Esophagus squamous epithelium (tissue), 5 donors: ENCODE measurements at regions of chr1 and their contacts with region 1.

Region 1: GRCh38 chr1:112706908-112707663 is at the start of gene RHOC:
- DNase-seq: peak; percentile 18
- H3K4me3 ChIP-seq: peak within 1 kb of the TSS; percentile 76 to 88 (median 78)
- H3K27ac ChIP-seq: peak within 1 kb of the TSS; percentile 93 to 96 (median 95)
- H3K4me1 ChIP-seq: peaks cover 21 to 57% (median 37%) of the 10 kb centered on the region in 3 donors
- H3K27me3 ChIP-seq: no peaks in the 10 kb centered on the region
- CTCF ChIP-seq: peak; percentile 79 to 97 (median 90)
- POLR2A ChIP-seq: peak in 2 of 4 donors; percentile 75 to 83
- total RNA-seq, gene RHOC: 49.9 to 108 (median 78.0) TPM

Region 2: DNA sequence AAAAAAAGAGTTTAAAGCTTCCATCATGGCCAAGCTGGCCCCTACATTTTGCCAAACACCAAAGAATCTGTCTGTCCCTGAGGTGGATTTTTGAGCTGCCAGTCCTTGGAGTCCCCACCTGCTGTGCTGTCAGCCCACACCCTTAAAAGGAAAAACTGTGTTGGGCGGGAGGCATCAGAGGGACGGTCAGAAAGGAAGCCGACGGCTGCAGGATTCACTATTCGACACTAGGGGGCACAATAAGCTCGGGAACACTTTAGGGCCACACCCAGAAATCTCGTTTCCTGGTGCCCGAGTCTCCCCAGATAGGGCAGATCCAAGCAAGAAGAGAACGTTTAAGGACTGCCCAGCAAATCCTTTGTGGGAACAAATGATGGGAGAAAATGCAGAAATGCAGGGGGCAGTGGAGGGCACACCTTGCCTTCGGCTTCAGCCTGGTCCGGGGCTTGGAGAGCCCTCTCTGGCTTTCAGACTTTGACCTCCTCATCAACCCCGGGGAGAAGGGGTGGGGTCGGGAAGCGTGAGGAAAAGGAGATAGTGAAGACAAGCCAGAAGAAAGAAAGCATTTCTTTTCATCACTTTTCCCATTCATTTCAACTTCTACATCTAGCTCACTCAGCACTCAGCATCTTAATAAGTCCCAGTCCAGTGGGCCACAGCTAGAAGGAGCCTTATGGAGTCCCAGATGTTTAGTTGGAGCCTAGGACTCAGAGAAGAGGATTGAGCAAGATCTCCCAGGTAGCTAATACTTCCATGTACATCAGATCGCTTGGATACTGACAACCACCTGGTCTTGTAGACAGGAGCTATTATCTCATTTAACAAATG is 316.1 kb before region 1 on chr1:
- intact Hi-C with region 1: loop called (anchors 5 kb)
- DNase-seq: peak; percentile 28
- H3K4me3 ChIP-seq: peak overlapping the region; percentile 22 to 64 (median 47)
- H3K27ac ChIP-seq: peak overlapping the region; percentile 83 to 98 (median 95)
- H3K4me1 ChIP-seq: peaks cover 27 to 56% (median 29%) of the 10 kb centered on the region in 3 donors
- H3K27me3 ChIP-seq: no peaks in the 10 kb centered on the region
- CTCF ChIP-seq: peak; percentile 86 to 98 (median 96)
- POLR2A ChIP-seq: peak in 1 of 4 donors; percentile 12

Region 3: GRCh38 chr1:112501810-112502641 is 205.1 kb before region 1 on chr1:
- intact Hi-C with region 1: loop called (anchors 10 kb)
- DNase-seq: no peak
- H3K4me3 ChIP-seq: peak overlapping the region; percentile 55 to 74 (median 65)
- H3K27ac ChIP-seq: peak overlapping the region in 3 of 4 donors; percentile 66 to 76 (median 68)
- H3K4me1 ChIP-seq: peaks cover 7 to 22% (median 18%) of the 10 kb centered on the region in 3 donors
- H3K27me3 ChIP-seq: peaks cover 0 to 30% (median 0%) of the 10 kb centered on the region in 4 donors
- CTCF ChIP-seq: peak; percentile 55 to 86 (median 73)
- POLR2A ChIP-seq: no peak

Region 4: GRCh38 chr1:112619520-112620376 is 87.3 kb before region 1 on chr1 and contains the start of gene CAPZA1:
- intact Hi-C with region 1: loop called (anchors 2 kb)
- DNase-seq: peak; percentile 62
- H3K4me3 ChIP-seq: peak within 1 kb of the TSS; percentile 85 to 98 (median 92)
- H3K27ac ChIP-seq: peak within 1 kb of the TSS; percentile 98 to 100 (median 99)
- H3K4me1 ChIP-seq: peaks cover 4 to 72% (median 29%) of the 10 kb centered on the region in 3 donors
- H3K27me3 ChIP-seq: no peaks in the 10 kb centered on the region
- CTCF ChIP-seq: no peak
- POLR2A ChIP-seq: peak in 3 of 4 donors; percentile 41 to 96 (median 83)
- total RNA-seq, gene CAPZA1: 129 to 286 (median 209) TPM